ENCODE measurements at regions of chr7 and their contacts with region 1.

Region 1: DNA sequence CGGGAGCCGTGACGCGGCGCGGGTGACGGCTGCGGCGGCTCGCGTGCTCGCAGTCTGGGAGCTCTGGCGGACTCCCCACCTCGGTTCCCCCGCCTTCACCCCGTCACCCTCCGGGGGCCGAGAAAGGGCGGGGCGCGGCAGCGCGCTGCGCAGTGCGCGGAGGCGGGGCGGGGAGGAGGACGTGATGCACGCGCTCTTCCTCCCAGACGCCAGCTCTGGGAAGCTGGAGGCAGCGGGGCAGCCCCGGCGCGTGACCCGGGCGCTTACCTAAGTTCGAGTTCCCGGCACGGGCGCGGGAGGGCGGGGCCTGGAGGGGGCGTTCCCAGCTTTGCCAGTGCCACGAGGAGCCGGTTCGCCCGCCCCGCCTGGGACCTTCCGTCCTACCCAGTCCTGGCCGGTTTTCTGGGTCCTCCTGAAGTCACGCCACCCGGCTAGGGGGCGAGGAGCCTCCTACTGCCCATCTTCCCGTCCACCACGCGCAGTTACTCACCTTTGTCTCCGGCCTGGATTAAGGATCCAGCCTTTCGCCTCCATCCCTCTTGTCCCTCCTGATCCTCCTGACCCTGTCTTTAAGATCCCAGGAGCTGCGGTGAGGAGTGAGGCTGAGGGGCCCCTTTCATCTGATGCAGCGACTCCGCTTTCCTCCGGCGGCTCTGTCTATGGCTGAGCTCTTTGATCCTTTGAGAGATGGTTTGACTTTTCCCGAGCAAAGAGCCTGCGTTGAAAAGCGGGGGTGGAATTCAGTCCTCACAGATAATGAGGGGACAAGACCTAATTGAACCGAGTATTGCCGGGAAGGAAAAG is 470 bp upstream of the NAMPT start:
- DNase-seq: peak; percentile 96
- ATAC-seq: peak; percentile 88
- H3K4me3 ChIP-seq: peak overlapping the region; percentile 77 to 83
- H3K27ac ChIP-seq: peak overlapping the region; percentile 80
- H3K4me1 ChIP-seq: peaks cover 13 to 45% of the 10 kb centered on the region in 2 experiments; a peak in 3 of 4 replicates
- H3K27me3 ChIP-seq: no peaks in the 10 kb centered on the region
- CTCF ChIP-seq: no peak
- POLR2A ChIP-seq: peak; percentile 70
- RAD21 ChIP-seq: 0 out of 2 replicates have a peak, but pooled peaks have one; percentile 13

Region 2: GRCh38 chr7:106346678-106347217 is 61.5 kb after region 1 on chr7:
- CTCF ChIA-PET with region 1: no interaction called
- POLR2A ChIA-PET with region 1: no interaction called
- RAD21 ChIA-PET with region 1: no interaction called
- intact Hi-C with region 1: loop called (anchors 2 kb)
- DNase-seq: peak; percentile 96
- ATAC-seq: peak; percentile 92
- H3K4me3 ChIP-seq: no peak overlapping the region
- H3K27ac ChIP-seq: peak overlapping the region; percentile 6; the same call in 1 of the 2 replicates
- H3K4me1 ChIP-seq: peaks cover 18 to 26% of the 10 kb centered on the region in 2 experiments
- H3K27me3 ChIP-seq: no peaks in the 10 kb centered on the region
- CTCF ChIP-seq: no peak
- POLR2A ChIP-seq: no peak
- RAD21 ChIP-seq: peak; percentile 45; the same call in 1 of the 2 replicates

Region 3: GRCh38 chr7:106623853-106624252 is 338.6 kb after region 1 on chr7:
- CTCF ChIA-PET with region 1: no interaction called
- POLR2A ChIA-PET with region 1: no interaction called
- RAD21 ChIA-PET with region 1: no interaction called
- intact Hi-C with region 1: no loop called
- DNase-seq: no peak
- ATAC-seq: no peak
- H3K4me3 ChIP-seq: no peak overlapping the region
- H3K27ac ChIP-seq: no peak overlapping the region
- H3K4me1 ChIP-seq: peaks cover 20 to 31% of the 10 kb centered on the region in 2 experiments
- H3K27me3 ChIP-seq: no peaks in the 10 kb centered on the region
- CTCF ChIP-seq: no peak
- POLR2A ChIP-seq: no peak
- RAD21 ChIP-seq: no peak

Measured in HCT116 (cell line).